CD8-positive, alpha-beta memory T cell (primary cell): ENCODE measurements at regions of chr17 and their contacts with region 1.

Region 1: DNA sequence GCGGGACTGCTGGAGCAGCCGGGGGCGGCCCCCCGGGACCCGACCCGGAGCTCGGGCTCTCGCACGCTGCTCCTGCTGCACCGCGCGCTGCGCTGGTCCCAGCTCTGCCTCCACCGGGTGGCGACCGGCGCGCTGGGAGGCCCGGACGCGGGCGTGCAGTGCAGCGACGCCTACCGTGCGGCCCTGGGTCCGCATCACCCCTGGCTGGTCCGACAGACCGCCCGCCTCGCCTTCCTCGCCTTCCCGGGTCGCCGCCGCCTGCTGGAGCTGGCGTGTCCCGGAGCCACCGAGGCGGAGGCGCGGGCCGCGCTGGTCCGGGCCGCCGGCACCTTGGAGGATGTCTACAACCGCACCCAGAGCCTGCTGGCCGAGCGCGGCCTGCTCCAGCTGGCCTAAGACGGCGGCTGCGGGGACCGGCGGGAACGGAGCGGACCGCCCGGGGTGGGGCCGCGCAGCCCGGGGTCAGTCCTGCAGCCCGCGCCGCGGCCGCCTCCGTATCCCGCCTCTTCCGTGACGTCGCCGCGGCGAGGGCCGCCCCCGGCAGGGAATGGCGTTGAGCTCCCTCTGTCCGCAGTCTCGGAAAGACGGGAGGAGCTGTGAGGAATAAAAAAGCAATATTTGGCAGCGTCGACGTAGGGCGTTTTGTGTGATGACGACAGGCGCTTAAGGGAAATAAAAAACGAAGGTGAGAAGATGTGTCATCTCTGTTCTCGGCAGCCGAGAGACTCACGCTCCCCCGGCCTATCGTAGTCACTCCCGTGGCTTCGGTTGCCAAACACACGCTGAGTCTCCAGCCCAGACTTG is 1.3 kb downstream of the GLTPD2 start:
- DNase-seq: peak; percentile 67 to 86 (median 76)
- H3K4me3 ChIP-seq: peak overlapping the region; percentile 42
- H3K4me3 Mint-ChIP-seq: peak overlapping the region; percentile 82 to 95 (median 89)
- H3K27ac ChIP-seq: peak overlapping the region; percentile 83
- H3K27ac Mint-ChIP-seq: peak overlapping the region; percentile 70 to 95 (median 89)
- H3K4me1 ChIP-seq: peaks cover 24% of the 10 kb centered on the region
- H3K4me1 Mint-ChIP-seq: peaks cover 18 to 38% (median 26%) of the 10 kb centered on the region in 3 donors
- H3K27me3 ChIP-seq: peaks cover 9% of the 10 kb centered on the region
- H3K27me3 Mint-ChIP-seq: peaks cover 29 to 33% of the 10 kb centered on the region in 2 donors

Region 2: DNA sequence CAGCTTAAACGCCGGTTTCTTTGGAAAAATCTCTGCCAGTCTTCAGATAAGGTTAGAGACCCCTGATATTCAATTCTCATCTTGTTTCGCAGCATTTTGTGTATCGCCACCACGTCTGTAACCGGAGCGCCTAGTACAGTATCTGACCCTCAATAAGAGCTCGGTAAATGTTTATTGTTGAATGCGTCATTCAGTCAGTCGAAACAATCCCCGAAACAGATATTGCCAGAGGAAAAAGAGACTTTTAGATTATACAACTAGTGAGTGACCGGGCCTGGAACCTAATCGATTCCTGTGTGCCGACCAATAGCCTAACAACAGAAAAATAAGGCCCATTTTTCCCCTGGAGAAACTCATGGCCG is 86.8 kb before region 1 on chr17:
- CTCF ChIA-PET with region 1: interaction called, 52 read pairs
- POLR2A ChIA-PET with region 1: interaction called, 3 read pairs
- DNase-seq: no peak
- H3K4me3 ChIP-seq: peak overlapping the region; percentile 80
- H3K4me3 Mint-ChIP-seq: peak overlapping the region; percentile 81 to 95 (median 91)
- H3K27ac ChIP-seq: peak overlapping the region; percentile 86
- H3K27ac Mint-ChIP-seq: peak overlapping the region; percentile 75 to 98 (median 94)
- H3K4me1 ChIP-seq: peaks cover 27% of the 10 kb centered on the region
- H3K4me1 Mint-ChIP-seq: peaks cover 34 to 59% (median 45%) of the 10 kb centered on the region in 3 donors
- H3K27me3 ChIP-seq: no peaks in the 10 kb centered on the region
- H3K27me3 Mint-ChIP-seq: peaks cover 0 to 3% of the 10 kb centered on the region in 2 donors

Region 3: GRCh38 chr17:4715063-4715744 is 74.9 kb before region 1 on chr17:
- CTCF ChIA-PET with region 1: interaction called, 52 read pairs
- POLR2A ChIA-PET with region 1: interaction called, 24 read pairs
- DNase-seq: peak; percentile 39 to 78 (median 69)
- H3K4me3 ChIP-seq: peak overlapping the region; percentile 48
- H3K4me3 Mint-ChIP-seq: peak overlapping the region; percentile 78 to 96 (median 84)
- H3K27ac ChIP-seq: peak overlapping the region; percentile 39
- H3K27ac Mint-ChIP-seq: peak overlapping the region; percentile 91 to 99 (median 96)
- H3K4me1 ChIP-seq: peaks cover 47% of the 10 kb centered on the region
- H3K4me1 Mint-ChIP-seq: peaks cover 40 to 73% (median 44%) of the 10 kb centered on the region in 3 donors
- H3K27me3 ChIP-seq: no peaks in the 10 kb centered on the region
- H3K27me3 Mint-ChIP-seq: peaks cover 0 to 2% of the 10 kb centered on the region in 2 donors

Region 4: GRCh38 chr17:4800462-4801196 is 10.5 kb after region 1 on chr17:
- CTCF ChIA-PET with region 1: interaction called, 15 read pairs
- POLR2A ChIA-PET with region 1: no interaction called
- DNase-seq: no peak
- H3K4me3 ChIP-seq: no peak overlapping the region
- H3K4me3 Mint-ChIP-seq: peak overlapping the region in 2 of 7 donors; percentile 45 to 61
- H3K27ac ChIP-seq: no peak overlapping the region
- H3K27ac Mint-ChIP-seq: peak overlapping the region in 6 of 8 donors; percentile 7 to 56 (median 10)
- H3K4me1 ChIP-seq: peaks cover 11% of the 10 kb centered on the region
- H3K4me1 Mint-ChIP-seq: peaks cover 12 to 15% (median 13%) of the 10 kb centered on the region in 3 donors
- H3K27me3 ChIP-seq: no peaks in the 10 kb centered on the region
- H3K27me3 Mint-ChIP-seq: no peaks in the 10 kb centered on the region

Region 5: DNA sequence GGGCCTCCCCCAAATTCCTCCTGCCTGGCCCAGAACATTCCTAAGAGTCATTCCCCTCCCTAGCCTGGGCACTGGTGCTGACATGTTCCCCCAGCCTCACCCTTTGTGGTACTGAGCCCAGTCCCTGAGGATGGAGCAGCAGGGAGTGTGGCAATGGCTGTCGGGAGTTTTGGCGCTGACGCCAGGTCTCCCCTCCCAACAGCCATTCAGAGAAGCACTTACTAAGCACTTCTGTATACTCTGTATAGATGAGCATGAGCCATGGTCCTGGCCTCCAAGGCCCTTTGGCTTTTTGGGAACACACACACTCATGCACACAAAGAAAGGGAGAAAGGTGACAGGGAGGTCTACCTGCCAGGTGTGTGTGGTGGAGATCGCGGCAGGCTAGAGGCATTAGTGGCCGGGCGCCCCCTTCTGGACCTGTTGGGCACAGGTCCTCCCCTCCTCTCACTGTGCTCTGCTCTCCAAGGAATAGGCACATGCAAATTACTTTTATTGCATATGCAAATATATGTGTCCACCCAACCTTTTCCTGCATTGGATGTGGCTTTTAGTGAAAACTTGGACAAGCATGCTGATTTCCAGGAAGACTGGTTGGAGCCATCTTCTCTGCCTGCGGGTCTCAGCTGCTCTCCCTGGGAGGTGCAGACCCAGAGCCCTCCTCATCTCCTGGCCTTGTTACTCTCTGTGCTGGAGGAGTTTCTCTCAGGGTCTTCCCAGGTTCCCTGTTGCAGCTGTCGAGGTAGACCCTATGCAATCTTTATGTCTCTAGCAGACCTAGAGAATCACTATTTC is 91.9 kb after region 1 on chr17:
- CTCF ChIA-PET with region 1: interaction called, 10 read pairs
- POLR2A ChIA-PET with region 1: interaction called, 4 read pairs
- DNase-seq: peak; percentile 42 to 78 (median 45)
- H3K4me3 ChIP-seq: no peak overlapping the region
- H3K4me3 Mint-ChIP-seq: no peak overlapping the region
- H3K27ac ChIP-seq: no peak overlapping the region
- H3K27ac Mint-ChIP-seq: peak overlapping the region in 4 of 8 donors; percentile 12 to 75 (median 64)
- H3K4me1 ChIP-seq: no peaks in the 10 kb centered on the region
- H3K4me1 Mint-ChIP-seq: peaks cover 0 to 2% (median 0%) of the 10 kb centered on the region in 3 donors
- H3K27me3 ChIP-seq: no peaks in the 10 kb centered on the region
- H3K27me3 Mint-ChIP-seq: no peaks in the 10 kb centered on the region